Right ventricle myocardium superior (tissue), 1 donor: ENCODE measurements at regions of chr11 and their contacts with region 1.

Region 1: DNA sequence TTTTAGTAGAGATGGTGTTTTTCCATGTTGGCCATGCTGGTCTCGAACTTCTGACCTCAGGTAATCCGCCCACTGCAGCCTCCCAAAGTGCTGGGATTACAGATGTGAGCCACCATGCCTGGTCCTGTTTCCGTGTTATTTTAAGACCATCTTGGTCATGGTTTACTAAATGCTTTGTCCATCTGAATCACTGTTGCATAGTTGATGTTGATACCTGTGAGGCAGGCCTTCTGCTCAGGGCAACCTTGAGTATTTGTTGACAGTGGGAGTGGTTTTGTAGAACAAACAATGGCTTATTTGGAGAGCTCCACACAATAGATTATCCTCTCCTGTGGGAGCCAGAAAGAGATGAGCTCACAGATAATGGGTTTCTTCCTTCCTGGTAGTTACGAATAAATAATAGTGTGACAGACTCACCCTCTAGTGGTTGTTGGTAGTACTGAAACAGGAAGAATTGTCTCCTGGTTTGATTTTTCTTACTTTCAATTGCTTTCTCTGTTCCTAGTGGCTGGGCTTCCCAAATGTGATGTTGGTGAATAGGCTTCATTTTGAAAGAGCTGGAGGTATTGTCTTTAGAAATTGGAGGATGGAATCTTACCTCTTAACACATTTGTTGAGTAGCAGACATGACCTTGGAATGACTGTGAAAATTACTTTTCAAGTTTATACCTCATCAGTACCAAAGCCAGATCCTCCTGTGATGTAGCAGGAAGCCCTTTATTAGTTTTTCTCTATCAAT is 39.0 kb downstream of the CTNND1 start:
- DNase-seq: no peak
- ATAC-seq: peak; percentile 72

Region 2: GRCh38 chr11:57144075-57144474 is 656.5 kb before region 1 on chr11:
- intact Hi-C with region 1: no loop called
- DNase-seq: no peak
- ATAC-seq: no peak

Region 3: DNA sequence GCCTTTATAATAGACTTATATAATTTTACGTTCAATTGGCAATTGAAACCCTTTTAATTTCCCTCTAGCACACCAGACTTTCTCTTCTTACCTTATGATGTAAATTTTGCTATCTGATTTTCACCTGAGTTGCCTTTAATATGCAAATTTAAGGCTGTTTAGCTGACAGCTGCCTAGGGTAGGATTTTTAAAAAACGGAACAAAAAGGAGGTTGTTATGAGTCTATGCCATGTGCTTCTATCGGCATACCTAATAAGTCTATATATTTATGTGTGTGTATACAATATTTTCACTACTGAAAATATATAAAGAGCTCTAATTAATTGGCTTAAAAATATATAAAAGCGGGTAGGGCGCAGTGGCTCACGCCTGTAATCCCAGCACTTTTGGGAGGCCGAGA is 71.1 kb before region 1 on chr11:
- intact Hi-C with region 1: no loop called
- DNase-seq: no peak
- ATAC-seq: no peak

Region 4: GRCh38 chr11:57741132-57742086 is 59.2 kb before region 1 on chr11 and contains the start of gene SELENOH:
- intact Hi-C with region 1: loop called (anchors 10 kb)
- DNase-seq: peak; percentile 97
- ATAC-seq: peak; percentile 97
- total RNA-seq, gene SELENOH: 88.4 TPM

Region 5: DNA sequence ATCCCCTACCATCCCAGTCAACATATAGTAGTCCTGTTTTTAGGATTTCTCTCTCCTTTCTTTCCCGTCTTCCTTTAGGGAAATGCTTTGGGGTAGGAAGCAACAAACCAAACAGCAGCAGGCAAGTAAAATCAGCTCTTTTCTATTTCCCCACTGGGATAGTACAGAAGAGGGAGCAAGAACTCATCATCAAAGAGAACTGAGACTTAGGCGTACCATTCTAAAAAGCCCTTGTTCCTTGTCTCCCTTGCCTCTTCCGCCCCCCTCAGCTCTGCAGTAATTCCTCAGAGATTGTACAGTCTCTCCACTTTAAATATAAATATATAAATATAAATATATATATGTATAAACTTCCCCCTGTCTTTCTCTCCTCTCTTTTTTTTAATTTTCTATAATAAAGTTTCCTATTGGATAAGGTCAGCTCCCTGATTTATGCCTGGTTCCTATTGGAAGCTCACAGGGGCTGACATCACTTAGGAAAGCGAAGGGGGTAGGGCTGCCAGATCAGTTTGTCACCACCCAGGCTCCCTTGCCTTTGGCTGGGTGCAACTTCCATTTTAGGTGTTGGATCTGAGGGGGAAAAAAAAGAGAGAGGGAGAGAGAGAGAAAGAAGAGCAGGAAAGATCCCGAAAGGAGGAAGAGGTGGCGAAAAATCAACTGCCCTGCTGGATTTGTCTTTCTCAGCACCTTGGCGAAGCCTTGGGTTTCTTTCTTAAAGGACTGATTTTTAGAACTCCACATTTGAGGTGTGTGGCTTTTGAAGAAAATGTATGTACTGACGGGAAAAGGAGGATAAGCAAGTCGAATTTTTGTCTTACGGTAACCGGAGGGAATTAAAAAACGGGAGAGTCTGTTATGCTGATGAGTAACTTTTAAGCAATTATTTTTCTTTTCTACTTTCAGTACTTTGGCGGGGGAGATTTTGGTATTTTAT is 39.0 kb before region 1 on chr11 and contains the start of gene CTNND1:
- intact Hi-C with region 1: loop called (anchors 2 kb)
- DNase-seq: peak; percentile 88
- ATAC-seq: peak; percentile 99
- total RNA-seq, gene CTNND1: 66.5 TPM